AG04450 (cell line): ENCODE measurements at regions of chr7 and their contacts with region 1.

Region 1: DNA sequence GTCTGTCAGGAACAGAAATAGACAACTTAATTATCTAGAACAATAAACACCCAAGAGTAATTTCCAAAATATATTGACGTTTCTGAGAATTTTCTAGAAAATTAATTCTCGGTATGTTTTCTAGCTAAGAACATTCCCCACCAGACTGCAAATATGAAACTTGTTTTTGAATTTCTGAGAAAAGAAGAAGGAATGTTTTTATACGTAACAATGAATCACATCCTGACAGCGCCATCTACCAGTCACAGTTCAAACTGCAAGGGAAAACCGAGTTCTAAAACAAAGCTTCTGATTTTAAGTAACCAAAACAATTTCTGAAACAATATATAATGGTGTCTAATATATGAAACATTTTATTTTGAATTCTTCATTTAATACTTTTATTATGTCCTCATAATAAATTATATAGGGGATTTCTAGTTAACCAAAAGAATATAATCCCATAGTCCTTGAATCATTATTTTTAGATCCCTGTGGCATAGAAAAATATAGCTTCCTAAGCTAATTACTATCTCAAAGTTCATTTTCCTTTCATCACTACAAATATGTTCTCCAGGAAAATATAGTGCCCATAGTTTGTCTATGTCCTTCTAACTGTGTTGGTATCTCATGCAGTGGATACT is 34.5 kb upstream of the MEOX2 start:
- DNase-seq: peak; percentile 11
- H3K4me3 ChIP-seq: no peak overlapping the region
- H3K27ac ChIP-seq: no peak overlapping the region
- H3K27me3 ChIP-seq: no peaks in the 10 kb centered on the region
- CTCF ChIP-seq: peak; percentile 77

Region 2: DNA sequence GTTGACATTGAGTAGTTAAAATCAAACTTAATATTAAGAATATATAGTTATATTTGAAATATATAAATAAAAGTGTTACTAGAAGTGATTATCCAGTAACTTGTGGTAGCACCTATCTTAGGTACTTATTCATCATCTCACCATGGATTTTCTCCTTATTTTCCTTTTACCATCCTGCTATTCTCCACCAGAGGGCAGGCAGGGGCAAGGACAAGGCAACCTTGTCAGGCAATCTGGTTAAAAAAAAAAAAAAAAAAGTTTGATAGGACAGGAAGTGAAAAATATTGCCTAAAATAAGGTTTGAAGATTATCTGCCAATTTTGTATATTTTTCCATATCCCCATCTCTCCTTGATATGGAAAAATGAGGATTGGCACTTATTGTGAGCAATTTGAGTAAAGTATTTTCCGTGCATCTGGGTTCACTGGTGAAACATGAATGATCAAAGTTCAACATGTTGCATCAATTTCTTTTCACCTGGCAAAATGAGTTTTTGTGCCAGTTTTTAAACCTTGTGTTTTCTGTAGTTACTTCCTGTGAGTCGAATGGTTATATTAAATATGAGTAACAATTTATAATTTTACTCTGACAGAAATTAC is 415.9 kb before region 1 on chr7:
- CTCF ChIA-PET with region 1: interaction called, 40 read pairs
- POLR2A ChIA-PET with region 1: no interaction called
- DNase-seq: peak; percentile 15
- H3K4me3 ChIP-seq: no peak overlapping the region
- H3K27ac ChIP-seq: no peak overlapping the region
- H3K27me3 ChIP-seq: no peaks in the 10 kb centered on the region
- CTCF ChIP-seq: peak; percentile 87

Region 3: DNA sequence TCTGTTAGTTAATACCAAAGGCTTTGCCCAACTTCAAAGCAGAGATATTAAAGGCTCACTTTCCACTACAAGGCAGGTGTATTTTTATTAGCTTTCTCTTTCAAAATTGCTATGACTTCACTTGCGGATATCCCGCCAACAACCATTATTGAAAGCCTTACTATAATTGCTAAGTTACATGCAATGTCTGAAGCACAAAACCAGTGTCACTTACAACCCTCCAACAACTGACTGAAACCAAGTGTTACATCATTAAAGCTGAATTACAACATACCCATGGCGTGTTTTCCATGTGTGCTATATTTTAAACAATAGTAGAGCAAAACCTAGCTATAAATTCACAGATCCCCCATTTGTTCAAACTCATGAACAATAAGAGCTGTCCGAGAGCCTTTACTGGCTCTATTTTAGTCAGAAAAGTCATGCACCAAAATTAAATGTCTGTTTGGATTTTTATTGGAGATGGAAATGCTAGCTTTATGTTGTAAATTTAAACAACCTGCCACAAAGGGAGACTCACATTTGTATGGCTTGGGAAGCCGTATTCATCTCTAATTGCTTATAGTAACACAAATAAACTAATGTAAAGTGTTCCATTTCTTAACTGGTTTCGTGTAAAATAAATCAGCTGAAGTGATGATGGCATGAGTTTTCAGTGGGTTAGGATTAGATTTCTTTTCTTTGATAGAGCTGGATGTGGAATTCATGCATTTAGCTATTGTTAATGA is 386.3 kb before region 1 on chr7:
- CTCF ChIA-PET with region 1: interaction called, 10 read pairs
- POLR2A ChIA-PET with region 1: no interaction called
- DNase-seq: no peak
- H3K4me3 ChIP-seq: no peak overlapping the region
- H3K27ac ChIP-seq: no peak overlapping the region
- H3K27me3 ChIP-seq: no peaks in the 10 kb centered on the region
- CTCF ChIP-seq: no peak

Region 4: DNA sequence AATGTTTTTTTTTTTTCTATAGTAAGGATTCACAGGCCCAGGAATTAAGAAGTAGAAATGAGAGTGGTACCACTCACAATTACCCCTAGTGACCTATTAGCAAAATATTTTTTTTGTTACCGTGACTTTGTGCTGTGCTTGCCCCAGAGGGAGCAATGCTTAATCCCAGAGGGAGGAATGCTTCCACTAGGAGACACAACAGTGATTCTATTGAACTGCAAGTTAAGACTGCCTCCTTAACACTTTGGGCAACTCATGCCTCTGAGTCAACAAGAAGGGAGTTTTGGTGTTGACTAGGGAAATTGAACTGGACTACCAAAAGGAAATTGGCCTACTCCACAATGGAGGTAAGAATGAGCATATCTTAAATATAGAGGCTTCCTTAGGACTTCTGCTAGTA is 17.2 kb before region 1 on chr7:
- CTCF ChIA-PET with region 1: interaction called, 27 read pairs
- POLR2A ChIA-PET with region 1: no interaction called
- DNase-seq: no peak
- H3K4me3 ChIP-seq: no peak overlapping the region
- H3K27ac ChIP-seq: no peak overlapping the region
- H3K27me3 ChIP-seq: no peaks in the 10 kb centered on the region
- CTCF ChIP-seq: no peak

Region 5: GRCh38 chr7:15737601-15738000 is 16.6 kb after region 1 on chr7:
- CTCF ChIA-PET with region 1: interaction called, 33 read pairs
- POLR2A ChIA-PET with region 1: no interaction called
- DNase-seq: no peak
- H3K4me3 ChIP-seq: no peak overlapping the region
- H3K27ac ChIP-seq: no peak overlapping the region
- H3K27me3 ChIP-seq: no peaks in the 10 kb centered on the region
- CTCF ChIP-seq: no peak

Region 6: DNA sequence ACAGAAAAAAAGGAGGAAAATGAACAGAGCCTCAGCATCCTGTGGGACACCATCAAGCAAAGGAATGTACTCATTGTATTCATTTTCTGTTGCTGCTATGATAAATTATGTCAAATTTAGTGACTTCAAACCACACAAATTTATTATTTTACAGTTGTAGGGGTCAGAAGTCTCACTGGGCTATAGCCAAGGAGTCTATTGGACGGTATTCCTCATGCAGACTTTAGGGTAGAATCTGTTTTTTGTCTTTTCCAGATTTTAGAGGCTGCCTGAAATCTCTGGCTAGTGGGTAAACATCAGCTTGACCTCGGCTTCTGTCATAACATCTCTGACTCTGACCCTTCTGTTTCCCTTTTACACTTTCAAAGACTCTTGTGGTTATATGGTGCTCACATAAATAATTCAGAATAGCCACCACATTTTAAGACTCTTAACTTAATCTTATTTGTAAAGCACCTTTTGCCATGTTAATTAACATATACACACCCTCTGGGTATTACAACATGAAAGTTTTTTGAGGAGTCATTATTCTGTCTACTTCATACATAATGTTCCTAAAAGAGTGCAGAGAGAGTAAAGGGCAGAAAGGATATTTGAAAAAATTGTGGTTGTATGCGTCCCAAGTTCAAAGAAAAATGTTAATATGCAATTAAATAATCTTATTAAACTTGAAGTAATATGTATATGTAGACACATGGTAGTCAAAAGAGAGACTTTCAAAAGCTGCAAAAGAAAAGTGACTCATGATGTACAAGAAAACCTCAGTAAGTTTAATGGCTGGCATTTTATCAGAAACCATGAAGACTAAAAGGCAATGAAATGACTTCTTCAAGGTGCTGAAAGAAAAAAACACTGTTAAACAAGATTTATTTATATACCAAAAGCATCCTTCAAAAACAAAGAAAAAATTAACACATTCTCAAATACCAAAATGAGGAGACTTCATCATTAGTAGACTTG is 36.4 kb after region 1 on chr7:
- CTCF ChIA-PET with region 1: interaction called, 14 read pairs
- POLR2A ChIA-PET with region 1: no interaction called
- DNase-seq: no peak
- H3K4me3 ChIP-seq: no peak overlapping the region
- H3K27ac ChIP-seq: no peak overlapping the region
- H3K27me3 ChIP-seq: no peaks in the 10 kb centered on the region
- CTCF ChIP-seq: no peak

Region 7: DNA sequence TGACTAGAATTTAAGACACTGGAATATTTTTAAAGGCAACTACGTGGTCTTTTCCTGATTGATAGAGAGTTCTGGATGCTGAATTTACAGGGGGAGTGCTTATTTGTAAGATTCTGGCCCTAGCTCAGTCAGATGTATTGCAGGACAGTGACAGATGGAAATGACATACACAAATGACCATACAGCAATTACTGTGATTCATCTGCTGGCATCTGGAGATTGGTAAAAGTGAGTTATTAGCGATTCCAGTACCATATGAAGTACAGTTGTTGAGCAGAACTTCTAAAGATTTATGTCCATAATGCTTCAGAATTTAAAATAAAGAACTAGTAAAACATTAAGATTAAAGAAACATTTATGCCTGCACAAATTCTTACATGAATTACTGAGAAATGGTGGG is 457.1 kb after region 1 on chr7:
- CTCF ChIA-PET with region 1: no interaction called
- POLR2A ChIA-PET with region 1: no interaction called
- DNase-seq: no peak
- H3K4me3 ChIP-seq: no peak overlapping the region
- H3K27ac ChIP-seq: no peak overlapping the region
- H3K27me3 ChIP-seq: no peaks in the 10 kb centered on the region
- CTCF ChIP-seq: no peak